ENCODE measurements at regions of chr16 and their contacts with region 1.

Region 1: GRCh38 chr16:14249291-14250032 is 178.3 kb downstream of the MRTFB start:
- DNase-seq: peak; percentile 54
- H3K4me3 ChIP-seq: no peak overlapping the region; a peak in 1 of 4 replicates
- H3K27ac ChIP-seq: no peak overlapping the region
- H3K4me1 ChIP-seq: no peaks in the 10 kb centered on the region
- H3K27me3 ChIP-seq: no peaks in the 10 kb centered on the region
- CTCF ChIP-seq: peak; percentile 97
- EP300 ChIP-seq: no peak
- RAD21 ChIP-seq: peak; percentile 82

Region 2: GRCh38 chr16:14172200-14172782 is 77.2 kb before region 1 on chr16:
- CTCF ChIA-PET with region 1: no interaction called
- POLR2A ChIA-PET with region 1: no interaction called
- DNase-seq: no peak
- H3K4me3 ChIP-seq: no peak overlapping the region
- H3K27ac ChIP-seq: no peak overlapping the region
- H3K4me1 ChIP-seq: no peaks in the 10 kb centered on the region
- H3K27me3 ChIP-seq: no peaks in the 10 kb centered on the region
- CTCF ChIP-seq: no peak
- EP300 ChIP-seq: no peak
- RAD21 ChIP-seq: no peak

Region 3: DNA sequence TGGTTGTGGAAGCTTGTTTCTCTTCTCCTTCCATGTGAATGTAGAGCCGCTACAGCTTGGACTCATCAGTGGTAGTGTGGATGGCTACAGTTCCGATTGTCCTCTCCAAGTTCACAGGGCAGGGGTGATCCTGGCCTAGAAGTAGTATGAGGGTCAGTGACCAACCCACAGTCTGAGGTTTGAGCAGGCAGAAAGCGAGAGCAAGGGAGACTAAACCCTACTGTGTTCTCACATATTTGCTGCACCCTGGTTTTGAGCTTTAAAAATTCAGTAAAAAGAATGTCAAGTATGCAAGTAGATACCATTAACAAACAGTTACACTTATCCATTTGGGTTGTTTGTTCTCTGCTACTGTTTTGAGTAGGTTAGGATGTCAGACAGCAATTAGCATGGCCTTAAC is 29.5 kb before region 1 on chr16:
- CTCF ChIA-PET with region 1: interaction called, 11 read pairs
- POLR2A ChIA-PET with region 1: no interaction called
- DNase-seq: no peak
- H3K4me3 ChIP-seq: no peak overlapping the region
- H3K27ac ChIP-seq: no peak overlapping the region
- H3K4me1 ChIP-seq: no peaks in the 10 kb centered on the region; a peak in 1 of 4 replicates
- H3K27me3 ChIP-seq: no peaks in the 10 kb centered on the region
- CTCF ChIP-seq: no peak
- EP300 ChIP-seq: no peak
- RAD21 ChIP-seq: no peak

Region 4: GRCh38 chr16:14263011-14263410 is 13.5 kb after region 1 on chr16:
- CTCF ChIA-PET with region 1: interaction called, 31 read pairs
- POLR2A ChIA-PET with region 1: no interaction called
- DNase-seq: no peak
- H3K4me3 ChIP-seq: no peak overlapping the region
- H3K27ac ChIP-seq: no peak overlapping the region
- H3K4me1 ChIP-seq: no peaks in the 10 kb centered on the region
- H3K27me3 ChIP-seq: no peaks in the 10 kb centered on the region
- CTCF ChIP-seq: no peak
- EP300 ChIP-seq: no peak
- RAD21 ChIP-seq: no peak

Region 5: DNA sequence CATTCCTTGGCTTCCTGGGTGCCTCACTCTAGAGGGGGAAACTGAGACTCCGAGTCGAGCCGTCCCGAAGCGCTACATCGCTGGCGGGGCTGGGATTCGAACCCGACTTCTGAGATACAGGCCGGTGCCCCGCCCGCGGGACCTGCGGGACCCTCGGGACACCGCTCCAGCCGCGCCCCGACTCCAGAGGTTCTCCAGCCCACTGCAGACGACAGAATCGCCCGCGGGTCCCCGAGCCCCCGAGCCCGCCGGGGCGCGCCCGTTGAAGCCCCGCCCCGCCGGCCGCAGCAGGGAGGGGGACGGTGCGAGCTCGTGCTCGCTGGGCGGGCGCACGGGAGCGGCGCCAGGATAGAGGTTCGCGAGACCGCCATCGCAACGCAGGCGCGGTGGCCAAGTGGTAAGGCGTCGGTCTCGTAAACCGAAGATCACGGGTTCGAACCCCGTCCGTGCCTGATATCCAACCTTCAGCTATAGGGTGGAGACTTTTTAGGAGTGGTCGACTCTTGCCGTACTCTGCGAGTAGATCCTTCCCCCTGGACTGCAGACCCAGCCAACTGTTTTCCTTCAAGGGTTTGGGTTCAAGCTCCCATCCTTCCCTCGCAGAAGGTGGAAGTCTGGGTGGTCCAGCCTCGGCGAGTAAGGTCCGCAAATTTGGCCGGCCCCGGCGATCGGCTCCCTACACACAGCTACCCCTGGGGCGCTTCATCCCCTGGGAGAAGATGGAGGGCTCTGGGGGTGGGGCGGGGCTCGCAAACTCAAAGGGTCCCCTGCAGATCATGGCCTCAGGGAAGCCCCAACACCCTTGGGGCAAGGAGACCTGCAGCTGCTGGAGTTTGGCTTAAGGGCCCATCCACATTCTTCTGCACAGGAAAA is 36.3 kb after region 1 on chr16:
- CTCF ChIA-PET with region 1: interaction called, 23 read pairs
- POLR2A ChIA-PET with region 1: no interaction called
- DNase-seq: peak; percentile 96
- H3K4me3 ChIP-seq: peak overlapping the region; percentile 84 to 97
- H3K27ac ChIP-seq: peak overlapping the region; percentile 40 to 61; a peak in 3 of 4 replicates
- H3K4me1 ChIP-seq: peaks cover 0 to 10% of the 10 kb centered on the region in 2 experiments; a peak in 1 of 4 replicates
- H3K27me3 ChIP-seq: no peaks in the 10 kb centered on the region
- CTCF ChIP-seq: no peak
- EP300 ChIP-seq: no peak
- RAD21 ChIP-seq: no peak